Dorsolateral prefrontal cortex (tissue), 120 donors: ENCODE measurements at regions of chr12 and their contacts with region 1.

Region 1: DNA sequence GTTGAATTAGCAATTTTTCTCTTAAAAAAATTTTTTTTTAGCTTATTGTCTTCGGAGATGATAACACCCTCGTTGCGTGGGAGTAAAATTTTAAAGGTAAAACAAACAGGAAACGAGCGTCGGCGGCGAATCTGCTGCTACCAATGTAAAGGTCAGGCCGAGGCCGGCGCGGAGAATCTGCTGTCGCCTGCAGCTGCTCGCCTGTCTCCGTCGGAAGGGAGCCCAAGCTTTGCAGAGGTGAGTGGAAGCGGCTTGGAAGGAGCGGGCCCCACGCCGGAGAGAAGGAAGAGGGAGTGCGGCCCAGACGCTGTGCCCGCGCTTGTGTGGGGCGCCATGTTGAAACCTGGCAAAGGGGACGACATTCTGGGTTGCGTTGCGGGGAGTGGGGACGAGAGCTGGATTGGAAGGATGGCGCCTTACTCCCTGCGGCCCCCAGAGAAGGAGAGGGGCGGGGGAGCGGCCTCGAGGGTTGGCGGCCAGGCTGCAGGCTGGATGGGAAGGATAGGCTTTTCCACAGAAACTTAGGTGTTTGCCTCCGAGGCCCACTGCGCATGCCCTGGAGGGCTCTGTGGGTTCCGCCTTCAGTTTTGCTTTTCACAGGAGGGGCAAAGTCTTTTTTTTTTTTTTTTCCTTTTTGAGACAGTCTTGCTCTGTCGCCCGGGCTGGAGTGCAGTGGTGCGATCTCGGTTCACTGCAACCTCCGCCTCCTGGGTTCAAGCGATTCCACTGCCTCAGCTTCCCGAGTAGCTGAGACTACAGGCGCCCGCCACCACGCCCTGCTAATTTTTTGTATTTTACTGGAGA is at the start of gene SNRNP35:
- DNase-seq: peak; percentile 65 to 83 (median 77)
- H3K4me3 ChIP-seq: peak within 1 kb of the TSS; percentile 63 to 97 (median 83)
- H3K27ac ChIP-seq: peak within 1 kb of the TSS; percentile 94 to 100 (median 99)
- H3K27me3 ChIP-seq: no peaks in the 10 kb centered on the region
- CTCF ChIP-seq: peak in 13 of 56 donors; percentile 2 to 38 (median 11)
- total RNA-seq, gene SNRNP35: 18.2 to 41.5 (median 27.9) TPM

Region 2: GRCh38 chr12:123286652-123287373 is 171.4 kb before region 1 on chr12:
- intact Hi-C with region 1: no loop called
- DNase-seq: no peak
- H3K4me3 ChIP-seq: peak overlapping the region in 1 of 59 donors; percentile 10
- H3K27ac ChIP-seq: peak overlapping the region in 8 of 59 donors; percentile 10 to 45 (median 28)
- H3K27me3 ChIP-seq: no peaks in the 10 kb centered on the region
- CTCF ChIP-seq: no peak

Region 3: GRCh38 chr12:123533672-123534643 is 75.8 kb after region 1 on chr12 and contains the start of gene RILPL1:
- intact Hi-C with region 1: loop called in 1 of 2 experiments (anchors 2 kb)
- DNase-seq: peak; percentile 36 to 78 (median 46)
- H3K4me3 ChIP-seq: peak within 1 kb of the TSS; percentile 68 to 94 (median 81)
- H3K27ac ChIP-seq: peak within 1 kb of the TSS; percentile 58 to 97 (median 94)
- H3K27me3 ChIP-seq: no peaks in the 10 kb centered on the region
- CTCF ChIP-seq: peak in 47 of 56 donors; percentile 1 to 71 (median 34)
- total RNA-seq, gene RILPL1: 26.8 to 64.9 (median 37.5) TPM

Region 4: DNA sequence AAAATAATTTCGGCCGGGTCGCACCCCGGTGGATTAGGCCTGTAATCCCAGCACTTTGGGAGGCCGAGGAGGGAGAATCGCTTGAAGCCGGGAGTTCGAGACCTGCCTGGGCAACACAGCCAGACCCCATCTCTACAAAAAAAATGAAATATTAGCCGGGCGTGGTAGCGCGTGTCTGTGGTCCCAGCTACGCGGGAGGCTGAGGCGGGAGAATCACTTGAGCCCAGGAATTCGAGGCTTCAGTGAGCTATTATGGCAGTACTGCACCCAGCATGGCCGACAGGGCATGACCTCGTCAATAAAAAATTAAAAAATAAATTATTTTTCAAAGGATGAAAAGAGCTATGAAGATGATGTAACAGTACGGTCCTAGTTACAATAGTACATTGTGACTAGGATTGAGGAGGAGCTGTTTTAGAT is 176.0 kb after region 1 on chr12:
- intact Hi-C with region 1: no loop called
- DNase-seq: no peak
- H3K4me3 ChIP-seq: peak overlapping the region; percentile 57 to 100 (median 93)
- H3K27ac ChIP-seq: peak overlapping the region in 52 of 59 donors; percentile 4 to 93 (median 78)
- H3K27me3 ChIP-seq: no peaks in the 10 kb centered on the region
- CTCF ChIP-seq: no peak